Sigmoid colon (tissue), 7 donors: ENCODE measurements at regions of chr1 and their contacts with region 1.

Region 1: DNA sequence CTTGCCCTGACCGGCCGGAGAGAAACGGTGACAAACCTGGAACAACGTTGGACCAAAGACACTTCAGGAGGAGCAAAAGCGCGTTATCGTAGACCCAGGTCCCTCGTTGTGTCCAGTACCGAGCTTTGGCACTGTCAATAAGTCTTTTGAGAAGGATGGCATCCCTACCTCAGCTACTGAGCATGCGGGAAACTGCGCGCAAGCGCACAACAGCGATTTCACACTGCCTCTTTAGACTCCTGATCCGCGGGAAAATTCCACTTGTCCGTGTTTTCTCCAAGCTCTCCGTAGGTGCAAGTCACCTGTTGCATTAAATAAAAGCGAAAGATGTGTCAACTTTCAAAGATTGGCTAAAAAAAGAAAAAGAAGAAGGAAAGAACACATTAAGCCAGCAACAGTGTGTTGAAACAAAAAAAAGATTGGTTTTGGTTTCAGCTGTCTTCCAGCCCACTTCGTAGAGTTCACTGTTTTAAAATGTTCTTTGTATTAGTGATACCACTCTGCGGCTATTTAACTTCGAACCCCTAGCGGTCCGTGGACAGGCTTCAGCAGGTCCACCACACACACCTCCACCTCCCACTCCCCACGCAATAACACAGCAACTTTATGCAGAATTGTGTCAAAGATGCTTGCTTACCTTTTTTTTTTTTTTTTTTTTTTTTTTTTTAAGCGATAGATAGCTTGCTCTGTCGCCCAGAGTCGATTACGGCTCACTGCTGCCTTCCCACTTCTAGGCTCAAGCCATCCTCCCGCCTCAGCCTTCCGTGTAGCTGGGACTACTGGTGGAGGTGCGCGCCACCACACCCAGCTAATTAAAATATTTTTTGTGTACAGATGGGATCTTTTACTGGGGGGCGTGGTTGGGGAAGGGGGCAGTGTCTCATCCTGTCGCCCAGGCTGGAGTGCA is at the start of gene BPNT1:
- DNase-seq: peak; percentile 96
- H3K4me3 ChIP-seq: peak within 1 kb of the TSS; percentile 42 to 66 (median 56)
- H3K27ac ChIP-seq: peak within 1 kb of the TSS; percentile 55 to 71 (median 62)
- H3K4me1 ChIP-seq: peaks cover 4 to 18% (median 8%) of the 10 kb centered on the region in 4 donors
- H3K27me3 ChIP-seq: no peaks in the 10 kb centered on the region
- CTCF ChIP-seq: no peak
- EP300 ChIP-seq: no peak
- POLR2A ChIP-seq: peak in 1 of 2 donors; percentile 40
- total RNA-seq, gene BPNT1: 13.3 to 19.7 (median 16.8) TPM

Region 2: DNA sequence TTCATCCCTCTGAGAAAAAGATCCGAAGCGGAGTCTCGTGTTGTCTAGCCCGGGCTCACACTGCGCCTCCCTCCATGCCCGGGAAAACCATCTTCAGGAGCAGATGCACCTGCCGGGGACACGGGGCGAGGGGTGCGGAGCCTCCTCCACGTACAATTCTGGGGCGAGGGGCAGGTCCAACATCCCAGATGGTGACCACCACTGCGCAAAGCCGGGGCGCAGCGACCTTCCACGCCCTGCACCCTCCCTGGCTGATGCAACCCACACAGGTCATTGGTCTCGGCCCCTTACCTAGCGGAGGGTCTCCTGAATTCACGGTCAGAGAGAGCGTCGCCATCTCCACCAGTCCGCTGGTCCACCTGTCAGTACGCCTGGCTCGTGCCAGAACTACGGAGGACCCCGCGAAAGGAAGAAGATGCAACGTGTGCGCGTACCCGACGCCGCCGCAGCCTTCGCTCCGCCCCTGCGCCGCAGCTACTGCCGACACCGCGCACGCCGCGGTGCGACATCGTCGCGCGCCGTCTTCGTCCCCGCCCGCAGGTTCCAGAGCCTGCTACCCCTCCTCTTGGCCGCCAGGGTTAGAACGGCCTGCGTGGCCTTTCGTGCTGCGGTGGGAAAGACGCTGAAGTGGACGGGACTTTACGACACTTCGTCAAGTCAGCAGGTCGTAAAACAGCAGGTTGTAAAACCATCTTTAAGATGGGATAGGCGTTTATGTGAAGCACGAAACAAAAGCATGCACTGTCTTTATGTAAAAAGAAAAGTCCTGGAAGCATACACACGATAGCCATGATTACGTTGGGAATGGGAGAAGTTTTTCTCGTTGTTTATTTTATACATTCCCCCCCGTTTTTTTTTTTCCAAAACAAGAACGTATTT is 43.6 kb before region 1 on chr1 and contains the start of gene EPRS1:
- intact Hi-C with region 1: loop called (anchors 5 kb)
- DNase-seq: peak; percentile 97
- H3K4me3 ChIP-seq: peak within 1 kb of the TSS; percentile 59 to 92 (median 83)
- H3K27ac ChIP-seq: peak within 1 kb of the TSS; percentile 90 to 92 (median 92)
- H3K4me1 ChIP-seq: peaks cover 0 to 26% (median 22%) of the 10 kb centered on the region in 4 donors
- H3K27me3 ChIP-seq: no peaks in the 10 kb centered on the region
- CTCF ChIP-seq: peak; percentile 71 to 89 (median 86)
- EP300 ChIP-seq: peak in 1 of 4 donors; percentile 38
- POLR2A ChIP-seq: peak; percentile 44 to 60
- total RNA-seq, gene EPRS1: 30.5 to 51.0 (median 47.9) TPM

Region 3: GRCh38 chr1:220344745-220345144 is 254.8 kb after region 1 on chr1:
- intact Hi-C with region 1: no loop called
- DNase-seq: no peak
- H3K4me3 ChIP-seq: no peak overlapping the region
- H3K27ac ChIP-seq: no peak overlapping the region
- H3K4me1 ChIP-seq: no peaks in the 10 kb centered on the region
- H3K27me3 ChIP-seq: no peaks in the 10 kb centered on the region
- CTCF ChIP-seq: no peak
- EP300 ChIP-seq: no peak
- POLR2A ChIP-seq: no peak

Region 4: GRCh38 chr1:220825819-220826551 is 736.1 kb after region 1 on chr1:
- intact Hi-C with region 1: no loop called
- DNase-seq: no peak
- H3K4me3 ChIP-seq: no peak overlapping the region
- H3K27ac ChIP-seq: peak overlapping the region in 2 of 4 donors; percentile 11 to 38
- H3K4me1 ChIP-seq: peaks cover 0 to 59% (median 40%) of the 10 kb centered on the region in 4 donors
- H3K27me3 ChIP-seq: no peaks in the 10 kb centered on the region
- CTCF ChIP-seq: no peak
- EP300 ChIP-seq: no peak
- POLR2A ChIP-seq: no peak